ENCODE measurements at regions of chr10 and their contacts with region 1.

Region 1: DNA sequence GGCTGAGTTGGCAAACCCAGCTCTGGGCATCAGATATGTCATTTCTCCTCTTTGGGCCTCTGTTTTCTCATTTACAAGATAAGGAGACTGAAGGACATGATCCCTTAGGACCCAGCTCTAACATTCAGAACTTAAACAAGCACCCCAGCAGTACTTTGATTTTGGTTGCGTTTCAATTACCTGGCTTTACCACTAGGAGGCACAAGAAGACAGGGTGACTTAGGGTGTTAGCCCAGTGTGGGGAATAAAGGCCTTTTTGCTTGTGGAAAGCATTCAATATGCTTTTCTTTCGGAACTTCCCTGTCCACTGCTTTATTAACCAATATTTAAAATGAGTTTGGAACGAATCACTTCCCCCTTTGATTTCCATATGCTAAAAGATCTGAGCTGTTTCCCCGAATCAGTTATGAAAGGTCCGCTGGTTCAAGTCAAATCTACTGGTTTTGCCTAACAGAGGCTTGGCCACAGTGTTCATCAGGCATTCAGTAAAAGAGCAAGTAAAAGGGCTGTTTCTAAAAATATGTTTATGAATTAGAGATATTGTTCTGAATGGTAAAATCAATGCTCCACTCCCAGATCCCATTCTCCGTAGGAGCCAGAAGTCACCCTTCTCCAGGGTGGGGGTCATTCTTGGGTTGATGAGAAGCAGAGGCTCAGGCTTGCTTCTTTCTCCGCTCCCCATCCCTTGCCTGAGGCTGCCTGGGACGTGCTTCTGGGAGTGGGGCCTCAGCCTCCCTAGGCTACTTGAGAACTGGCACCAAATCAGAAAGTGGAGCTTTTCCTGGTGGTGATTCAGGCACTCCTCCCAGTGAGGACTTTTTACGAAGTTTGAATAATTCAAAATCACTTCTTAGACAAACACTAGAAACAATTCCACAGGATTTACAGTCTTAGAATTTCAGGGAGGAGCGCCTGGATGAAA is 105.5 kb downstream of the MYOF start:
- DNase-seq: peak; percentile 62
- H3K4me3 Mint-ChIP-seq: no peak overlapping the region
- H3K27ac Mint-ChIP-seq: no peak overlapping the region
- H3K4me1 Mint-ChIP-seq: peaks cover 35% of the 10 kb centered on the region
- H3K27me3 Mint-ChIP-seq: peaks cover 5% of the 10 kb centered on the region

Region 2: GRCh38 chr10:91579329-91579985 is 1797.2 kb before region 1 on chr10:
- CTCF ChIA-PET with region 1: no interaction called
- intact Hi-C with region 1: no loop called
- DNase-seq: no peak
- H3K4me3 Mint-ChIP-seq: no peak overlapping the region
- H3K27ac Mint-ChIP-seq: no peak overlapping the region
- H3K4me1 Mint-ChIP-seq: no peaks in the 10 kb centered on the region
- H3K27me3 Mint-ChIP-seq: peaks cover 17% of the 10 kb centered on the region

Region 3: DNA sequence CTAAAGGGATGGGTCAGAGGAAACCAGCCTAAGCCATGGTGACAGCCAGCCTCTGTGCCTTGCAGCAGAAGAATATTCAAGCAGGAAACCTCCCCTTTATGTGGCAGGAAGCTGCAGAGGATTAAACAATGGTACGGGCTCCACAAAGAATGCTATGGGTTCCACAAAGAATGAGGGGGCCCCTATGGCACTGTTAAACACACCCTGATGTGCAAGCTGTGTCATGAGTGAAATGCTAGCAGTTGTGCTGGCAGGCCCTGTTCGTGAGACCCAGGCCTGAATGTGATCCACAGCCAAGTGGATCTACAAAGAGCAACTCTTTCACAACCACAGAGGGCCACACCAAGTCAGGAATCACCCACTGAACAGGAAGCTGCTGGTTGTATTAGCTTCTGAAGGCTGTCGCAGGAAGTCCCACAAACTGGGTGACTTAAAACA is 36.6 kb after region 1 on chr10:
- CTCF ChIA-PET with region 1: interaction called, 12 read pairs
- intact Hi-C with region 1: loop called (anchors 1 kb)
- DNase-seq: peak; percentile 64
- H3K4me3 Mint-ChIP-seq: no peak overlapping the region
- H3K27ac Mint-ChIP-seq: peak overlapping the region; percentile 59
- H3K4me1 Mint-ChIP-seq: peaks cover 59% of the 10 kb centered on the region
- H3K27me3 Mint-ChIP-seq: no peaks in the 10 kb centered on the region

Region 4: DNA sequence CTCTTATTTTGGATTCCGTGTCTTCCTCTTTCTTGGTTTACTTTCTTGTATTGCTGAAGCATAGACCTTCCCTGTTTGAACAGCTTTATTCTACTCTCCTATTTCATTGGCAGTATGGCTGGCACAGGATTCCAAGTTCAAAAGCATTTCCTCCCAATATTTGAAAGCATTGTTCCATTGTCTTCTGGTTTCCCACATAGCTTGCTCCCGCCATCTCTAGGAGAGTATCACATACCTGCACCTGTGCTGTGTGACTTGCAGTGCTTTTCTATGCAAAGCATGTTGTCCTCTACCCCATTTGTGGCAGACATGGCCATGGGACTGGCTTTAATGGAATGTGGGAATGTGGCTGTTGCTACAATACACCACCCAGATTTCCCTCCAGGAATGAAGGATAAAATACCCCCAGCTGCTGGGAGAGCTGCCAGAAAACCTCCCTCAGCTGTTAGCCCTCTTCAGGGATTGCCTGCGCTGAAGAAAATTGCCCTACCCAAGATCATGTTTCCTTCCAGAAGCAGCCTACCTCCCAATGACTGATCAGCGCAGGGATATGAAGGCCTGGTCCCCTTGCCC is 112.4 kb after region 1 on chr10:
- CTCF ChIA-PET with region 1: interaction called, 331 read pairs
- intact Hi-C with region 1: no loop called
- DNase-seq: no peak
- H3K4me3 Mint-ChIP-seq: no peak overlapping the region
- H3K27ac Mint-ChIP-seq: no peak overlapping the region
- H3K4me1 Mint-ChIP-seq: no peaks in the 10 kb centered on the region
- H3K27me3 Mint-ChIP-seq: peaks cover 18% of the 10 kb centered on the region

Region 5: DNA sequence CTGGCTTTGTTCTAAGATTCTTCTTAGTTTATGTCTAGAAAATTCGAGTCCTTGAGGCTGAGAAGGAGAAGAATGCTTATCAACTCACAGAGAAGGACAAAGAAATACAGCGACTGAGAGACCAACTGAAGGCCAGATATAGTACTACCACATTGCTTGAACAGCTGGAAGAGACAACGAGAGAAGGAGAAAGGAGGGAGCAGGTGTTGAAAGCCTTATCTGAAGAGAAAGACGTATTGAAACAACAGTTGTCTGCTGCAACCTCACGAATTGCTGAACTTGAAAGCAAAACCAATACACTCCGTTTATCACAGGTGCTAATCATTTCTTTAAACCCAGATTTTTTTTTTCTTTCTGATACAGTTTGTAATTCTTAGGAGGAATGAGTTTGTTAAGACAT is 126.4 kb after region 1 on chr10:
- CTCF ChIA-PET with region 1: interaction called, 30 read pairs
- intact Hi-C with region 1: loop called (anchors 5 kb)
- DNase-seq: no peak
- H3K4me3 Mint-ChIP-seq: no peak overlapping the region
- H3K27ac Mint-ChIP-seq: no peak overlapping the region
- H3K4me1 Mint-ChIP-seq: peaks cover 22% of the 10 kb centered on the region
- H3K27me3 Mint-ChIP-seq: no peaks in the 10 kb centered on the region

Region 6: GRCh38 chr10:93680412-93681047 is 303.9 kb after region 1 on chr10:
- CTCF ChIA-PET with region 1: no interaction called
- intact Hi-C with region 1: loop called (anchors 1 kb)
- DNase-seq: no peak
- H3K4me3 Mint-ChIP-seq: no peak overlapping the region
- H3K27ac Mint-ChIP-seq: no peak overlapping the region
- H3K4me1 Mint-ChIP-seq: peaks cover 7% of the 10 kb centered on the region
- H3K27me3 Mint-ChIP-seq: no peaks in the 10 kb centered on the region

Region 7: DNA sequence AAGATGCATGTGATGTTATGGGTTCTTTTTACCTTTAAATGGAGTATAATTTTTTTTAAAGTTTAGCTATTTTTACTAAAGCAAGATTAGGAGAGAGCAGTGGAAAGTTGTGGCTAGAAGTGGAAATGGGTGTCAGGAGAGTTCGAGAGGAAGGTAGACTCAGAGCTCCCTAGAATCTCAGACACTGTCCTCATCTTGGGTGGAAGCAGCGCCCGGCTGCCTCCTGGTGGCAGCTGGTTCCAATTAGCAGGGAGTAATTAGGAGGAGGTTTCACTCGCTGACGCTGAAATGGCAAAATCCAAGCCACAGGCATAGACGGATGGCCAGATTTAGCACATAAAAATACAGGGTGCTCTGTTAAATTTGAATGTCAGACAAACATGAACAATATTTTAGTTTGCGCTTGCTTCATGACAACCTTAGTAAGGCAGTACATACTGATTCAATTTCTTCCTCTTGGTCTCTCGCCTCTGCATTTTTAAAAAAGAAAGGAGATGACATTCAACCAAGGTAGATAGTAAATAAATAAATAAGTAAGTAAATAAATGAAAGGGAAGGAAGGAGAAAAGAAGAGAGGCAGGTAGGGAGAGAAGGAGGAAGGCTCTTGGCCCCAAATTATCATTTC is 439.6 kb after region 1 on chr10:
- CTCF ChIA-PET with region 1: interaction called, 5 read pairs
- intact Hi-C with region 1: loop called (anchors 1 kb)
- DNase-seq: peak; percentile 66
- H3K4me3 Mint-ChIP-seq: no peak overlapping the region
- H3K27ac Mint-ChIP-seq: no peak overlapping the region
- H3K4me1 Mint-ChIP-seq: peaks cover 4% of the 10 kb centered on the region
- H3K27me3 Mint-ChIP-seq: peaks cover 31% of the 10 kb centered on the region

Measured in activated naive CD4-positive, alpha-beta T cell treated with anti-CD3 and anti-CD28 coated beads for 36 hours (primary cell).